ENCODE measurements at regions of chr5 and their contacts with region 1.

Region 1: DNA sequence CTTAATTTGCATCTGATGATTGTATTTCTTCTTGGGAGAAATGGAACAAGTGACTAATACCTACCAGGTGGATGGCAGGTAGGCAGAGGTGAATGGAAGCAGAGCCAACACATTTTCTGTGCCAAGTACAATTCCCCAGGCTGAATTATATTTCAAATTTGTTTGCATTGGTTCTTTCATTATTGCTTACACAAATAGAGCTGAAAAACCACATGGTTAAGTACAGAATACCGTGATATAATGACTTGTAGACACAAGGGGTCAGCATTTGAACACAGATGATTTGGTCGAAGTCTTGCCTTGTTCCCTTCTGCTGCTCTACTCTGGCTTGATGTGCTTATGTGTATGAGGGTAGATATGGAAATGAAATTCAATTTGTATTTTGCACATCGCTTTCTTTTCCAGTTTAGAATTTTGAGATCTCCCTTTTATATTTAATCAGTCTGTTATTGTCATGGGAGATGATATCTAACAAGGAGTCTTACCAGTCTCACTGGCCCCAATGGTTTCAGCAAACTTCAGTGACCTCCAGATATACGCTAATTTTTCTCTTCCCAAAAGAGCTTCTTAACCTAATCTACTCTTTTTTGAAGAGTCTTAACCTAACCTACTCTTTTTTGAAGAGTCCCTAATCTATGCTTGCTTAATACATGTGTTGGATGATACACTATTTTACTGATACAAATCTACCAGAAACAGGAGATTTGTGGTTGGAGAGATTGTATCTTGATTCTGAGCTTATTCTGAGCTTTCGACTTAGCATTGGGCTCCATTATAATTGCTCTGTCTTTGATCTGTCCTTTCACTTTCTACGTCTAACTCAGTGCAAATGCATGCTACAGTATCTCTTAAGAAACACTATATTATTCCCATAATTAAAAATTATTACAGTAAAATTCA is 88.1 kb downstream of the PCSK1 start:
- DNase-seq: peak in 1 of 2 donors; percentile 79
- ATAC-seq: peak; percentile 82 to 84 (median 83)
- H3K4me3 ChIP-seq: no peak overlapping the region
- H3K4me3 Mint-ChIP-seq: no peak overlapping the region
- H3K27ac ChIP-seq: no peak overlapping the region
- H3K27ac Mint-ChIP-seq: no peak overlapping the region
- H3K4me1 ChIP-seq: peaks cover 3% of the 10 kb centered on the region
- H3K4me1 Mint-ChIP-seq: no peaks in the 10 kb centered on the region
- H3K27me3 ChIP-seq: peaks cover 7% of the 10 kb centered on the region
- H3K27me3 Mint-ChIP-seq: peaks cover 9 to 25% of the 10 kb centered on the region in 2 donors
- CTCF ChIP-seq: peak; percentile 22

Region 2: DNA sequence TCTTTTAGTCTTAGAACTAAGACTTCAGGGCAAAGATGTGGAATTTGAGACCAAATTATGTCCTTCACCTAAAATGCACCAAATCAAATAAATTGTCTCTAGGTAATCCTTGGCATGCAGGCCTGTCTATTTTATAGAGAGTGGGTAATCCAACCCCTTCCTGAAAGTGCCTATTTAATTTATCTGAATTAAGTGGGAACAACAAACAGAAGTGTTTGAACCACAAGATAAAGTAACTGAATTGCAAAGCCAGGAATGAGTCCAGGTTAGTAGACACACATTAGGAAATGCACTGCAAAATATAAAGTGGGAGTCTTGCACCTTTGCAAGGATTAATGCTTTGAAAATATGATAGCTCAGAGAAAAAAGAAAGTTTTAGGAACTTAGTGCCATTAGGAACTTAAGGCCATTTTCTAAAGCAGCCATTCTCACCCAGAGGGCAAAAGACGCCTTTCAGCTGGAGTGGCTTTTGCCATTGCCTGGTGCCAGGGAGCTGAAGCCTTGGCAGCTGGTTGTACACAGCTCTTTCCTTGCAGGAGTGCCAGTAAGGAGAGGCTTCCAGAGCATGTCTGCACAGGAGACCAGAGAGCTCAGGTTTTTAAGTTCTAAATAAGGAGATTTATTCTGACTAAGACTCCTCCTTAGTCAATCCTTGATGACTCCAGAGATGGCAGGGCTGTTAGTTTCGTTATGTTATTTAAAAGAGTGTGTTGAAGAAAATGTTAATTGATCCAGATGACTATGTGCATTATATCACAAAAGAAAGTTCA is 231.6 kb before region 1 on chr5:
- intact Hi-C with region 1: no loop called
- DNase-seq: no peak
- ATAC-seq: no peak
- H3K4me3 ChIP-seq: no peak overlapping the region
- H3K4me3 Mint-ChIP-seq: no peak overlapping the region
- H3K27ac ChIP-seq: no peak overlapping the region
- H3K27ac Mint-ChIP-seq: no peak overlapping the region
- H3K4me1 ChIP-seq: no peaks in the 10 kb centered on the region
- H3K4me1 Mint-ChIP-seq: no peaks in the 10 kb centered on the region
- H3K27me3 ChIP-seq: no peaks in the 10 kb centered on the region
- H3K27me3 Mint-ChIP-seq: peaks cover 0 to 2% of the 10 kb centered on the region in 2 donors
- CTCF ChIP-seq: no peak

Region 3: GRCh38 chr5:96601811-96602244 is 256.9 kb after region 1 on chr5:
- intact Hi-C with region 1: loop called (anchors 1 kb)
- DNase-seq: peak in 1 of 2 donors; percentile 82
- ATAC-seq: peak; percentile 81 to 93 (median 90)
- H3K4me3 ChIP-seq: no peak overlapping the region
- H3K4me3 Mint-ChIP-seq: no peak overlapping the region
- H3K27ac ChIP-seq: no peak overlapping the region
- H3K27ac Mint-ChIP-seq: no peak overlapping the region
- H3K4me1 ChIP-seq: peaks cover 3% of the 10 kb centered on the region
- H3K4me1 Mint-ChIP-seq: no peaks in the 10 kb centered on the region
- H3K27me3 ChIP-seq: peaks cover 4% of the 10 kb centered on the region
- H3K27me3 Mint-ChIP-seq: peaks cover 4 to 15% of the 10 kb centered on the region in 2 donors
- CTCF ChIP-seq: peak; percentile 85